Activated T-helper 1 cell treated with anti-CD3 and anti-CD28 coated beads, Interleukin-12 subunit alpha, Interleukin-12 subunit beta, Interleukin-2, Interleukin-4 antibody, amounts not matched to agents 30 ng/mL and 10 ng/mL and 1 ng/mL, durations not matched to agents 14 hours and 24 hours and 36 hours (primary cell): ENCODE measurements at regions of chr21 and their contacts with region 1.

Region 1: DNA sequence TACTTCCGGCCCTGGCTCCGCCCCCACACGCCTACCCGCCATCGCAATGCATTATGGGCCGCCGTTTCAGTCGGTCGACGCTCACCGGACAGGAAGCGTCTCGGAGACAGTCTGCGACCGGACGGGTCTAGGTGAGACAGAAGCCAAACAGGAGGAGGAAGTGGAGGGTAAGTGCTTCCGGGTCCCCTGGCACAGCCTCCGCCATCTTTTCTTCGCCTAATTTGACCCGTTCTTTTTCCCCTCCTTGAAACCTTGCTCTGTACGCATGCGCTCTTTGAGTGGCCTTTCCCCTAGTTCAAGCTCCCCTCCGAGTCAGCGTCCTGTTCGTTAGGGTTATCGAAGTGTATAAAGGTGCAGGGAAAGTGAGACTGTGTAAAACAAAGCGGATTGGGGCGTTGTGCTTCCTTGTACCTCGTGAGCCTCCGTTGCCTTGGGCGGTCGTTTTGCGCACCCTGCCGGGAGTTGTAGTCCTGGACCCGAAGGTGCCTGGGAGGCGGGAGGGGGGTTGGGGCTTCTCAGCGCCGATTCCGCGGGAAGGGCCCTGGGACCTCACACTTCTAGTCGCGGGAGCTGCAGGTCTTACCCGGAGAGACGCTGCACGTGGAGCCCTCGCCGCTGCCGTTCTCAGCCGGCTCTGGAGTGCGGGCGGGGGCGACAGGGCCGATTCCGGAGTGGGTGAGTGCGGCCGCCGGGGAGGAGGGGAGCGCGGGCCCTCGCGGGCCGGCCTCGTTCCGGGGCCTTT is at the starts of genes ATP5PF and GABPA:
- DNase-seq: peak; percentile 96
- H3K4me3 Mint-ChIP-seq: peak within 1 kb of the TSS; percentile 97
- H3K27ac Mint-ChIP-seq: peak within 1 kb of the TSS; percentile 100
- H3K4me1 Mint-ChIP-seq: peaks cover 41% of the 10 kb centered on the region
- H3K27me3 Mint-ChIP-seq: no peaks in the 10 kb centered on the region
- total RNA-seq, gene ATP5PF: 152 and 161 TPM in 2 replicates
- total RNA-seq, gene GABPA: 26.7 and 26.9 TPM in 2 replicates

Region 2: GRCh38 chr21:25421327-25422028 is 313.6 kb before region 1 on chr21:
- intact Hi-C with region 1: loop called (anchors 1 kb)
- DNase-seq: peak; percentile 60
- H3K4me3 Mint-ChIP-seq: peak overlapping the region; percentile 77
- H3K27ac Mint-ChIP-seq: peak overlapping the region; percentile 77
- H3K4me1 Mint-ChIP-seq: peaks cover 46% of the 10 kb centered on the region
- H3K27me3 Mint-ChIP-seq: peaks cover 2% of the 10 kb centered on the region

Region 3: GRCh38 chr21:25573409-25574206 is 161.5 kb before region 1 on chr21:
- intact Hi-C with region 1: loop called (anchors 1 kb)
- DNase-seq: peak; percentile 42
- H3K4me3 Mint-ChIP-seq: peak overlapping the region; percentile 83
- H3K27ac Mint-ChIP-seq: peak overlapping the region; percentile 97
- H3K4me1 Mint-ChIP-seq: peaks cover 83% of the 10 kb centered on the region
- H3K27me3 Mint-ChIP-seq: no peaks in the 10 kb centered on the region

Region 4: DNA sequence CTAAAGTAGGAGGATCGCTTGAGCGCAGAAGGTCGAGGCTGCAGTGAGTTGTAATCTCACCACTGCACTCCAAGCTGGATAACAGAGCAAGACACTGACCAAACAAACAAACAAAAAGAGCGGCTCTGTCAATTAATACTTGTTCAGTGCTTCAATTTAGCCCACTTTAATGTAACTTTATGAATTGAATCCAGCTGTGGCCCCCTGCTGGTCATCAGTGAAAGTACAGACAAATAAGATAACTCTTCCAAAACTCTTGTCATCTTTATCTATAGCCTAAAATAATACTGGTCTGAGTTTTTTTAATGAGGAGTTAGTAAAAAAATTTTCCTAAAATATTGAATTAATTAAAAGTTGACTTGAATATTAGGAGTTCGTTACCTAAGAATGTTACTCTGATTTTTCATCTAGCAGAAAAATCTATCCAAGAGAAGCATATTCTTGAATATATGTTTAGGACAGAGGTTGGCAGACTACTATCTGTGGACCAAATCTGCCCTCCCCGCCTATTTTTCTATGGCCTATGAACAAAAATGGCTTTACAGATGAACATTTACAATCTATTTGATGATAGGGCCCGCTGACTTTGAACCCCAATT is 26.5 kb before region 1 on chr21:
- intact Hi-C with region 1: loop called (anchors 2 kb)
- DNase-seq: peak; percentile 4
- H3K4me3 Mint-ChIP-seq: no peak overlapping the region
- H3K27ac Mint-ChIP-seq: no peak overlapping the region
- H3K4me1 Mint-ChIP-seq: no peaks in the 10 kb centered on the region
- H3K27me3 Mint-ChIP-seq: no peaks in the 10 kb centered on the region

Region 5: DNA sequence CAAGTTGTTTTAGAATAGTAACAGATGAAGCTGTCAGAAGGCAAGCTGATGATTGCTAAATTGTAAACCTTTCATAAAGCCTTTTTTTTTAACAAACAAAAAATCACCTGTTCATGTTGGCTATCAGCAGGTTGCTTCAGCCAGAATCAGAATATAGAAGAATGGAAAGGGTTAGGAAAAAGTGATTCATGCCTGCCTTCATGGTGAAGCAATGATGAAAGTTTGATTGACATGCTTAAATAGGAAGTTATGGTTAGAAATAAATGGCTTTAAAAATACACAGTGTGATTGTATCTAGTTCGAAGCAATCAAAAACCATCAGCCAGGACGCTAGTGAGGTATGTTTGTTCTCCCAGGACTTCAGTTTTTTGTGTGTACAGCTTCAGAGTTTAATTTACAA is 37.6 kb after region 1 on chr21:
- intact Hi-C with region 1: no loop called
- DNase-seq: no peak
- H3K4me3 Mint-ChIP-seq: no peak overlapping the region
- H3K27ac Mint-ChIP-seq: peak overlapping the region; percentile 23
- H3K4me1 Mint-ChIP-seq: peaks cover 5% of the 10 kb centered on the region
- H3K27me3 Mint-ChIP-seq: no peaks in the 10 kb centered on the region

Region 6: DNA sequence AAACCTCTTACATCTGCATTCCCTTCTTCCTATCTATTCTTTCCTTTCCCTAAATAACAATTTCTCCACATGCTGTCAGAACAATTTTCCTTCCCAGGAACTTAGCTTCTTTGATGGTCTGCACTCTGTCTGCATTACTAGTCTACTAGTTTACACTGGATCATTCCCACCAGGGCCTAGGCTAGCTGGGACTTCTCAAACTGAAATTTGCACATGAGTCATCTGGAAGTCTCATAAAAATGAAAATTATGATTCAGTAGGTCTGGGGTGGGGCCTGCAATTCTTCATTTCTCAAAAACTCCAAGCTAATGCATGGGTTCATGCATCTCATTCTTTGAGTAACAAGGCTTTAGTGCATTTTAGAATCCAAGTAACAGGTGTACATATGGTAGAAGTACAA is 73.9 kb after region 1 on chr21:
- intact Hi-C with region 1: no loop called
- DNase-seq: no peak
- H3K4me3 Mint-ChIP-seq: no peak overlapping the region
- H3K27ac Mint-ChIP-seq: no peak overlapping the region
- H3K4me1 Mint-ChIP-seq: peaks cover 5% of the 10 kb centered on the region
- H3K27me3 Mint-ChIP-seq: peaks cover 5% of the 10 kb centered on the region

Region 7: DNA sequence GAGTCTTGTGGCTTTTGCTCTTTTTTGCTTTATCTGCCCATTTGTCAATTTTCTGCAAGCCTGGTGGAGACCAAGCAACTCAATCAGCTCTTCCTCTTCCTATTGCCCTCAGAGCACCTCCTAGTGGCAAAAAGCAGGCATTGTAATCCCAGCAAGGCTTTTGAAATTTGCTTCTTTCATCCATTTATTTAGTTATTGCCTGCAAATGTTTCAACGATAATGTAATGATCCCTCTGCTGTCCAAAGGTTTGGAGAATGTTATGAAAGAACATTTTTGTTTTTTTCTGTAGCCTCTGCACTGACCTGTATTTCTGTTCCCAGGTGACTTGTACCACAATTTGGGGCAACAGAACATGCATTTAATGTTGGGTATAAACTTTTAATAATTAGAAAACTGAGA is 127.5 kb after region 1 on chr21:
- intact Hi-C with region 1: loop called (anchors 10 kb)
- DNase-seq: no peak
- H3K4me3 Mint-ChIP-seq: no peak overlapping the region
- H3K27ac Mint-ChIP-seq: no peak overlapping the region
- H3K4me1 Mint-ChIP-seq: peaks cover 8% of the 10 kb centered on the region
- H3K27me3 Mint-ChIP-seq: peaks cover 8% of the 10 kb centered on the region

Region 8: DNA sequence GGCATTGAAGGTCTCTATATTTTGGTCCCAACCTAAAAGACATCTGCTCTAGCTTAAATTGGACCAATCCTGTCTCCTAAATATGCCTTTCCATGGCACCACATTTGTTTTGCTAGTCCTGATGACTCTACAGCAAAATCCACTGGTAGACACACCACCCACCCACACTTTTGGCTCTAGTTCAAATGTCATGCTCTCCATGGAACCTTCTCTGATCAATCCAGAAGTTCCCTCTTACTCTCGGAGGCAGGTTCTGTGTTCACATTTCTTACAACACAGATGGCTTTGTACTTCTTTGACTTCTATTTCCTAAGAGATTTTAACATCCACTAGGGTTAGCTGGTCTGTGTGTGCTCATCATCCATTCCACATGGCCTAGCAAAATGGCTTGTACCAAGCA is 284.2 kb after region 1 on chr21:
- intact Hi-C with region 1: no loop called
- DNase-seq: no peak
- H3K4me3 Mint-ChIP-seq: no peak overlapping the region
- H3K27ac Mint-ChIP-seq: no peak overlapping the region
- H3K4me1 Mint-ChIP-seq: no peaks in the 10 kb centered on the region
- H3K27me3 Mint-ChIP-seq: no peaks in the 10 kb centered on the region

Region 9: GRCh38 chr21:26743524-26743923 is 1008.4 kb after region 1 on chr21:
- intact Hi-C with region 1: no loop called
- DNase-seq: no peak
- H3K4me3 Mint-ChIP-seq: no peak overlapping the region
- H3K27ac Mint-ChIP-seq: no peak overlapping the region
- H3K4me1 Mint-ChIP-seq: no peaks in the 10 kb centered on the region
- H3K27me3 Mint-ChIP-seq: peaks cover 2% of the 10 kb centered on the region